ENCODE measurements at regions of chr10 and their contacts with region 1.

Region 1: DNA sequence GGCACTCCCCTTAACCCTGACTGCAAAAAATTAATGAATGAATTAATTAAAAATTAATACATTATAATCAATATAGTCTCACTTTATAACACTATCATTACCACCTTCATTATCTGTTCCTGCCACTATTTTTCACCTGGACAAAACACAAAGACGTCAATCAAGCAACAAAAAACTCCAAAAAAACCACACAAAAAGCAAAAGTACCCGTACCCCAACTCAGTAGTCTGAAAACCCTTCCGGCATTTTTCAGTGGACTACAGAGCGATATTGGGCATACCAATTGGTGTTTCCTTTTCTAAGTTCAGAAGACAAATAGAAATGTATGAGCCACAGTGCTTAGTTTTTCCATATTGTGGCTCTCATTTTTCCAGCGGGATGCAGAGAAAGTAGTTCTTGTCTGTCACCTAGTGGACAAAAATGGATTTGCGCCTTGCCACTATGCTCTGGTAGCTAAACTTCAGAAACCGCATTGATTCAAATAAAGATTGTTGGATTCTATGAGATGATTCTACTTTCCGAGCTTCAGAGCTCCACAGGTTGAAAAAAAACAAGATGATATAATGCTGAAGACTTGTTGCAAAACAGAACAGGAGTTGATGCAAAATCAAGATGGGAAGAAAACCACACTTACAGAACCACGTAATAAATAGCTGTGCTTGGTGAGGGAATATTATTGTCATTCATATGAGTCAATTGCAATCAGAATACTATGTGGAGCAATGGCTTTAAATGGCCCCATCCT is 50.6 kb upstream of the ITGB1 start:
- DNase-seq: peak; percentile 63 to 81
- H3K4me3 ChIP-seq: no peak overlapping the region
- H3K27ac ChIP-seq: peak overlapping the region; percentile 92
- H3K4me1 ChIP-seq: peaks cover 67% of the 10 kb centered on the region
- H3K27me3 ChIP-seq: no peaks in the 10 kb centered on the region
- CTCF ChIP-seq: peak; percentile 93

Region 2: GRCh38 chr10:32256613-32257437 is 751.8 kb before region 1 on chr10:
- CTCF ChIA-PET with region 1: no interaction called
- POLR2A ChIA-PET with region 1: no interaction called
- intact Hi-C with region 1: loop called (anchors 10 kb)
- DNase-seq: peak in 1 of 2 experiments; percentile 47
- H3K4me3 ChIP-seq: no peak overlapping the region
- H3K27ac ChIP-seq: no peak overlapping the region
- H3K4me1 ChIP-seq: peaks cover 19% of the 10 kb centered on the region
- H3K27me3 ChIP-seq: no peaks in the 10 kb centered on the region
- CTCF ChIP-seq: peak; percentile 71

Region 3: GRCh38 chr10:32795598-32796183 is 213.0 kb before region 1 on chr10:
- CTCF ChIA-PET with region 1: interaction called, 3 read pairs
- POLR2A ChIA-PET with region 1: no interaction called
- intact Hi-C with region 1: loop called (anchors 1 kb)
- DNase-seq: peak in 1 of 2 experiments; percentile 7
- H3K4me3 ChIP-seq: no peak overlapping the region
- H3K27ac ChIP-seq: no peak overlapping the region
- H3K4me1 ChIP-seq: no peaks in the 10 kb centered on the region
- H3K27me3 ChIP-seq: no peaks in the 10 kb centered on the region
- CTCF ChIP-seq: peak; percentile 77

Region 4: DNA sequence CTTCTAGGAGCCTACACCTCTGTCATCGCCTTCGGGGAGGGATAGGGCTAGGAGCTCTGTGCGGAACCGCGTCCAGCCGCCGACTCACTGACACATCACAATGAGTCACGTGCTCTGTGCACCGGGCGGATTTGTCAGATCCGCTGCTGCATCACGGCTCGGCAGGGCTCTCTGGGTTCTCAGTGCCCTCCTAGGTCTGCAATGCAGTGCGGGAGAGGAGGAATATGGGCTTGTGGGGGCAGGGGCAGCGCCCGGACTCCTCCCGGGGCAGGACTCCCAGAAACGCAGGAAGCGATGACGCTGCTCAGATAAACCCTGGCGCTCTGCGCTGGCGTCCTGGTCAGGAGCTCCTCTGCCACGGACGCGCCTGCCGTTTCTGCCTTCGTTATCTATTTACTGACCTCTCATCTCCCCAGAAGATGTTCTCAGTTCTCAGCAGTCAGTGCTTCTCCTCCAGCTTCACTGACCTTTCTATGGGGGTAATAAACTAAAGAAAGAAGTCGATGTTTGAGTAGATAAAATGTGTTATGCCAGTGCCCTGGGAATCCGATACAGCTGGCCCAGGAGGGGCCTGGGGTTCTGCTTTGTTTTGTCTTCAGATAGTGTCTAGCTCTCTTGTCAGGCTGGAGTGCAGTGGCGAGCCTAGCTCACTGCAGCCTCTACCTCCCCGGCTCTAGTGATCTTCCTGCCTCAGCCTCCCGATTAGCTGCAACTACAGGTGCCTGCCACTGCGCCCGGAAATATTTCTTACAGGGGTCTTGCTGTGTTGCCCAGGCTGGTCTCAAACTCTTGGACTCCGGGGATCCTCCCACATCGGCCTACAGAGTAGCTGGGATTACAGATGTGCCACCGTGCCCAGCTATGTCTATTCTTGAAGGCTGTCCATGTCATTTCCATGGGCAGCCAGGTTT is 27.9 kb before region 1 on chr10:
- CTCF ChIA-PET with region 1: no interaction called
- POLR2A ChIA-PET with region 1: interaction called, 8 read pairs
- intact Hi-C with region 1: loop called (anchors 1 kb)
- DNase-seq: peak; percentile 92 to 94
- H3K4me3 ChIP-seq: peak overlapping the region; percentile 60
- H3K27ac ChIP-seq: peak overlapping the region; percentile 98
- H3K4me1 ChIP-seq: peaks cover 58% of the 10 kb centered on the region
- H3K27me3 ChIP-seq: no peaks in the 10 kb centered on the region
- CTCF ChIP-seq: no peak

Region 5: GRCh38 chr10:33134011-33134751 is 125.5 kb after region 1 on chr10:
- CTCF ChIA-PET with region 1: no interaction called
- POLR2A ChIA-PET with region 1: no interaction called
- intact Hi-C with region 1: loop called (anchors 1 kb)
- DNase-seq: peak; percentile 80 to 97
- H3K4me3 ChIP-seq: no peak overlapping the region
- H3K27ac ChIP-seq: peak overlapping the region; percentile 95
- H3K4me1 ChIP-seq: peaks cover 42% of the 10 kb centered on the region
- H3K27me3 ChIP-seq: no peaks in the 10 kb centered on the region
- CTCF ChIP-seq: no peak

Region 6: GRCh38 chr10:33273295-33274002 is 264.8 kb after region 1 on chr10:
- CTCF ChIA-PET with region 1: no interaction called
- POLR2A ChIA-PET with region 1: no interaction called
- intact Hi-C with region 1: loop called (anchors 1 kb)
- DNase-seq: peak; percentile 94 to 95
- H3K4me3 ChIP-seq: peak overlapping the region; percentile 45; the same call in 1 of the 2 replicates
- H3K27ac ChIP-seq: peak overlapping the region; percentile 98
- H3K4me1 ChIP-seq: peaks cover 32% of the 10 kb centered on the region
- H3K27me3 ChIP-seq: no peaks in the 10 kb centered on the region
- CTCF ChIP-seq: no peak

Region 7: DNA sequence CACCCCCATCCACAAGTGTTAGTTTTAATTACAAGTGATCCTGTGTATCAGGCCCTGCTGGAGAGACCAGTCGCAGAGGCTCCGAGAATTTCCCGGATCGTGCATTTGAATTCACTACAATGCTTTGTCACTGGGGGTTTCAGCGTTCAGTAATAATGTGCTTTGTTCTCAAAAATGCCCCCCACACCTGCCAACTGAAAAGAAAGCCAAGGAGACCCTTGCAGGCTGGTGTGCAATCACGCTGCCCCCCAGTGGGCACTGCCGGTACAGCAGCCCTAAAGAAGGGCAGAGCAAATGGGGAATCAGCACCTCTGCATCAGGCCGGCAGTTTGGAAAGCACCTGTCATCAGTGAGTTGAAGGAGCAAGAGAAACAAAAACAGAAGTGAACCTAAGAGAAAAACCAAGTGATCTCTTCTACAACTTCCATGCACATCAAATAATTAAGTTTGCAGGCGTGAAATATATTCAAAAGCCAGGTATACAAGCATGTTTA is 1628.8 kb after region 1 on chr10:
- CTCF ChIA-PET with region 1: no interaction called
- POLR2A ChIA-PET with region 1: no interaction called
- intact Hi-C with region 1: loop called (anchors 5 kb)
- DNase-seq: peak in 1 of 2 experiments; percentile 56
- H3K4me3 ChIP-seq: no peak overlapping the region
- H3K27ac ChIP-seq: no peak overlapping the region
- H3K4me1 ChIP-seq: peaks cover 5% of the 10 kb centered on the region; the same call in 1 of the 2 replicates
- H3K27me3 ChIP-seq: no peaks in the 10 kb centered on the region
- CTCF ChIP-seq: peak; percentile 94